ENCODE measurements at regions of chr2 and their contacts with region 1.

Region 1: DNA sequence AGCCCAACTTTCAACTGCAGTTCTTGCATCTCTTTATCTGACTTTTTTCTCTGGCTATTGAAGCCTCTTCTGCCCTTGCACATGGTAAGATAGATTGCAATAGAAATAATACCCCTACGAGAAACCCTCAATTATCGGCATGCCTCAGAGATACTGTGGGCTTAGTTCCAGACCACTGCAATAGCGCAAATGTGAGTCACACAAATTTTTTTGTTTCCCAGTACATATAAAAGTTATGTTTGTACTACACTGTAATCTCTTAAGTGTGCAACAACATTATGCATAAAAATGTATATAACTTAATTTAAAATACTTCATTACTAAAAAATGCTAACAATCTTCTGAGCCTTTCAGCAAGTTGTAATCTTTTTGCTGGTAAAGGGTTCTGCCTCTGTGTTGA is 124.7 kb downstream of the PDE1A start:
- DNase-seq: no peak

Region 2: GRCh38 chr2:182426082-182426917 is 124.1 kb after region 1 on chr2:
- intact Hi-C with region 1: no loop called
- DNase-seq: no peak

Region 3: DNA sequence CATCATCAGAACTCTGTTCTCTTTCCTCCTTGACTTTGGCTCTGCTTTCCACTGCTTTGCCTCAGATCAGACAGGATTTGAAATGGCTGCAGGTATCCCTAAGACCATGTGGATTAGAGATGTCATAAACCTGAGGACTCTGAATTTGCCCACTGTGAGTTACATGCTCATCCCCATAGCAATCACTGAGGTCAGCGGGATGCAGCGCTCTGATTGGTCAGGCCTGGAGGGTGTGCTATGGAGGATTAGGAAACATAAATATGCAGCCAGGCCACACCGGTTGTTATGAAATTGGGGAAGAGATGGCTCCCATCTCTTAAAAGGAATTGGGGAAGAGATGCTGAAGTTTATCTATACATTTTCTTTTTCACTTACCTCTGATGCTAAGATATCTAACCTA is 340.2 kb after region 1 on chr2:
- intact Hi-C with region 1: loop called (anchors 10 kb)
- DNase-seq: no peak

Measured in cardiac septum (tissue), 1 donor.